HEK293 (cell line): ENCODE measurements at regions of chr15 and their contacts with region 1.

Region 1: DNA sequence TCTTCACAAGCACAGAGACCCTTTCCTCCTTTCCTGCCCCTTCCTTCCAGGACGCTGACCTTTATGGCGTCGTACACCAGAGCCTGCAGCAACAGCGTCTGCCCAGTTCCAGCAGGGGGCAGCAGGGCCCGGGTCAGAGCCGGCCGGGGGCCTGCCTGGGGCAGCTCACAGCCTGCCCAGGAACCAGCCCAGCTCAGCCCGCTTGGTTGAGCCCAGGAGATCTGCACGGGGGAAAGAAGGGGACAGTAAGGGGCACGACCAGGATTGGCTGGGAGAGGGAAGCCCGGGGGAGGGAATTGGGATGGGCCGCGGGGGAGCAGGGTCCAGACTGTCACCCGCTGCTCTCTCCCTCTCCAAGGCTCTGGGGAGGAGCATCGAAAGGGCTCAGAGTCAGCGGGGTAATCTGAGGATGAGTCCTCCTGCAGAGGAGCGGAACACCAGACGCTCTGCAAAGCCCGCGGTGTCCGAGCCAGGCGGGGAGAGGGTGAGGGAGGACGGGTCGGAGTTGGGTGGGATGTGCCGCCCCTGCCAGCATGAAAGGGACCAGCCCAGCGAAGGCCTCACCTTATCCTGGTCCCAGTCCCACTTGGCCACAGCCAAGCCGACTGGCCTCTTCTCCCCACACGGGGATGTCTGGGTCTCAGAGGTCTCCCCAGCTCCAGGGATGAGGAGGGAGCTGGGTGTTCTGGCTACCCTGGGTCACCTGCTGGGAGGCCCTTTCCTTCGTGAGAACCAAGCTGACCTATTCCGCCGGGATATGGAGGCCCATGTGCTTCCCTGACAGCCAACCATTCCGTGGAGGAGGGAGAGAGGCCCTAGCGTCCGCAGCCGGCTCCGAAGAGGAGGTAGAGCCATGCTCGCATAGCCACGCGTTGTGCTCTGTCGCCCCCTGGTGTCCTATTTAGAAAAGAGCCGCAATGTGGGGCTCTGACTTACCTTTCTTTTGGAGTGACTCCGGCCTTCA is 7.4 kb upstream of the IGDCC3 start:
- H3K4me3 ChIP-seq: no peak overlapping the region
- H3K27ac ChIP-seq: peak overlapping the region; percentile 38; the same call in 1 of the 2 replicates
- H3K4me1 ChIP-seq: peaks cover 17% of the 10 kb centered on the region
- CTCF ChIP-seq: peak; percentile 97

Region 2: DNA sequence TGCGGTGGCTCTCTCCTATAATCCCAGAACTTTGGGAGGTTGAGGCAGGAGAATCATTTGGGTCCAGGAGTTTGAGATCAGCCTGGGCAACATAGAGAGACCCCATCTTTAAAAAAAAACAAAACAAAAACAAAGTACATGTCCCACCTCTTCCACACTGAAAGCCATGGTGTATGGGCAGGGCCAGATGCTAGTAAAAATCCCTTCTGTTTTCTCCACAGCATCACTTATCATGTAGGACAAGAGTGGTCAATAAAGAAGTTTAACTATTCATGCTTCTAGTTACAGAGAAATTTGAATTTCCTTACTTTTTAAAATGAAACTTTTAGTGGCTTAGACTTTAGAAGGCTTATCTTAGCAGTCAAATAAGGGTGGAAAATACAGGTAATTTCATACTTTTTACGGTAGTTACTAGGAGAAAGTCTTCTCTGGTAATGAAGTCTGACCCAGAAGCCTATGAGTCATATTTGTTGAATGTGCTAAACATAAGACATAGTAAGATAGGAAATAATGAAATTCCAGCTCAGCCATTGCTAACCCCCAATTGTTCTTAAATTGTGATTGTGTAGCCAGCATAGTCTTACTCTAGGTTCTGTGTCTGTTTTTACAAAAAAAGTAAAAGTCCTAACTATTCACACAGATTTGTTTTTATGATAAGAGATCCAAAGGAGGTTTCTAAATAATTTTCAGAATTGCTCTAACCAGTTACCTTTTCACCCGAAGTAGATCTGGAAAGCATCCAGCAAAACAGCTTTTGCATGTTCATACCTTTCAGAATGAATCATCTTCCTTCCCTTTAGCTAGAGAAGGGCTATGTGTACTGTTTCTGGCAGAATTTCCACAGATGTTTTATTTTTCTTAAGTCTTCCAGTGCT is 941.2 kb before region 1 on chr15:
- CTCF ChIA-PET with region 1: no interaction called
- POLR2A ChIA-PET with region 1: no interaction called
- H3K4me3 ChIP-seq: no peak overlapping the region
- H3K27ac ChIP-seq: no peak overlapping the region
- H3K4me1 ChIP-seq: no peaks in the 10 kb centered on the region; the same call in 1 of the 2 replicates
- CTCF ChIP-seq: no peak

Region 3: GRCh38 chr15:65101411-65101890 is 283.7 kb before region 1 on chr15:
- CTCF ChIA-PET with region 1: no interaction called
- POLR2A ChIA-PET with region 1: no interaction called
- H3K4me3 ChIP-seq: no peak overlapping the region
- H3K27ac ChIP-seq: no peak overlapping the region
- H3K4me1 ChIP-seq: no peaks in the 10 kb centered on the region
- CTCF ChIP-seq: no peak

Region 4: GRCh38 chr15:65304389-65305144 is 80.6 kb before region 1 on chr15 and contains the start of gene RNU5B-1:
- CTCF ChIA-PET with region 1: interaction called, 14 read pairs
- POLR2A ChIA-PET with region 1: interaction called, 12 read pairs
- H3K4me3 ChIP-seq: peak within 1 kb of the TSS; percentile 41
- H3K27ac ChIP-seq: peak within 1 kb of the TSS; percentile 83
- H3K4me1 ChIP-seq: peaks cover 8% of the 10 kb centered on the region; the same call in 1 of the 2 replicates
- CTCF ChIP-seq: peak; percentile 89; the same call in 1 of the 2 replicates

Region 5: DNA sequence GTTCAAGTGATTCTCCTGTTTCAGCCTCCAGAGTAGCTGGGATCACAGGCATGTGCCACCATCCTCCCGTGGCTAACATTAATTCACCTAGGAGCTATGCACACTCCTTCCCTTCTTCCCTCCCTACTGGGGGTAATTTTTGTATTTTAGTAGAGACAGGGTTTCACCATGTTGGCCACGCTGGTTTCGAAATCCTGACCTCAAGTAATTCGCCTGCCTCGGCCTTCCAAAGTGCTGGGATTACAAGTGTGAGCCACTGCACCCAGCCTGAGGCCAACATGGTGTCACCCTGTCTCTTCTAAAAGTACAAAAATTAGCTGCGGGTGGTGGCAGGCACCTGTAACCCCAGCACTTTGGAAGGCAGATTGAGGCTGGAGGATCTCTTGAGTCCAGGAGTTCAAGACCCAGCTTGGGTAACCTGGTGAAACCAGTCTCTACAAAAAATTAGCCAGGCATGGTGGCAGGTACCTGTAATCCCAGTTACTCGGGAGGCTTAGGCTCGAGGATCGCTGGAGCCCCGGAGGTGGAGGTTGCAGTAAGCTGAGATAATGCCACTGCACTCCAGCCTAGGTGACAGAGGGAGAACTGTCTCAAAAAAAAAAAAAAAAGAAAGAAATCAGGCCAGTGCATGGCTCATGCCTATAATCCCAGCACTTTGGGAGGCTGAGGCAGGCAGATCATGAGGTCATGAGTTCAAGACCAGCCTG is 74.6 kb before region 1 on chr15:
- CTCF ChIA-PET with region 1: interaction called, 454 read pairs
- POLR2A ChIA-PET with region 1: interaction called, 12 read pairs
- H3K4me3 ChIP-seq: no peak overlapping the region
- H3K27ac ChIP-seq: no peak overlapping the region
- H3K4me1 ChIP-seq: peaks cover 5% of the 10 kb centered on the region; the same call in 1 of the 2 replicates
- CTCF ChIP-seq: no peak

Region 6: DNA sequence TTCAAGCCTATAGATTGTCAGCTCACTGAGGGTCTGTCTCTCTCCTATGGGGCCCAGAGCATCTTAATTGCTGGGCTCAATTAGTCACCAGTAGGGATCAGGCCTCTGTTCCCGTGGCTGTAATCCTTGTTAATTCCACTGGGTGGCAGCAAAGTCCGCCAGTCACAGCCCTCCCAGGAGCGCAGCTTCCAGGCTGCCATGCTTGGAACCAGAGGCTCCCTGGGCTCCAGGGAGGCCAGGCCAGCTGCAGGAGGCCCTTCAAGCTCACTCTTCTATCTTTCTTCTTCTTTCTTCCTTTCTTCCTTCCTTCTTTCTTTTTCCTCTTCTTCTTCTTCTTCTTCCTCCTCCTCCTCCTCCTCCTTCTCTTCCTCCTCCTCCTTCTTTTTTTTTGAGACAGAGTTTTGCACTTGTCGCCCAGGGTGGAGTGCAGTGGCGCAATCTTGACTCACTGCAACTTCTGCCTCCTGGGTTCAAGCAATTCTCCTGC is 66.3 kb before region 1 on chr15:
- CTCF ChIA-PET with region 1: interaction called, 454 read pairs
- POLR2A ChIA-PET with region 1: interaction called, 5 read pairs
- H3K4me3 ChIP-seq: no peak overlapping the region
- H3K27ac ChIP-seq: no peak overlapping the region
- H3K4me1 ChIP-seq: no peaks in the 10 kb centered on the region
- CTCF ChIP-seq: peak; percentile 98

Region 7: GRCh38 chr15:65355173-65355987 is 29.8 kb before region 1 on chr15:
- CTCF ChIA-PET with region 1: interaction called, 10 read pairs
- POLR2A ChIA-PET with region 1: no interaction called
- H3K4me3 ChIP-seq: peak overlapping the region; percentile 7
- H3K27ac ChIP-seq: no peak overlapping the region; the same call in 1 of the 2 replicates
- H3K4me1 ChIP-seq: no peaks in the 10 kb centered on the region; the same call in 1 of the 2 replicates
- CTCF ChIP-seq: no peak

Region 8: DNA sequence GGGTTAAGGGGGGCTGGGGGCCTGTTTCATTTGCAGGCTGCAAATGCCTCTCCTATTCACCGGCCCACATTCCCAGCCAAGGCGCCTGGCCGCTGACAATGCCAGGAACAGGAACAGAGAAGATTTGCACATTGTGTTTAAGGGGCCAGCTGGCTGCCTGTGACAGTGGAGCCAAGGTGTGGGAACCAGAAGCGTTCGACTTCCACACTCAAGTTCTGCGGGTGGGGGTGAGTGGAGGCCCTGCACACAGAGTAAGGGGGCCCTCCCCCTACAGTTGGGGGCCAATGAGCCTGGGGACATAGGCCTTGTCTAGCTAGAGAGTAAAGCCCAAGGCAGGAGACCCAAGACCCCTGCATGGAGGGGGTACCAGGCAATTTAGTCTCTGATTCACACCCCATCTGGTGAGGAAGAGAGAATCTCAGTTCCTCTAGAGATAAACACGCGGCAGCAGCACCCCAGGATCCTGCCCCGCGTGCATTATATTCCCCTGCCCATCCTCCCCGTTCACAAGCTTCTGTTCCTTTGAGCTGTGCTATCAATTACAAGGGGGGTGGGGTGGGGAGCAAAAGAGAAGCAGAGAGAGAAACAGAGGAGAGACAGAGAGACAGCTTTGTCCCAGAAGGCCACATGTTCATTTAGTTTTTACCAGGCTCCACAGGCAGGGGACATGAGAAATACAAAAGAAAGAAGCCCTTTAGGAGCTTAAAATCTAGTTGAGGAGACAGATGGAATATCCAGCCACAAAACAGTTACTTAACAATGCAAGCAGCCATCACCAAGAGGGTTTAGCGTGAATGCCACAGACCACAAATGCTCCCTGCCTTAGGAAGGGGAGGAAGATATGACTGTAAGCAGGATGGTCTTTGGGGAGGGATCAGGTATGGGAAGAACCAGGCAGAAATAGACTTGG is 16.6 kb before region 1 on chr15:
- CTCF ChIA-PET with region 1: interaction called, 13 read pairs
- POLR2A ChIA-PET with region 1: interaction called, 3 read pairs
- H3K4me3 ChIP-seq: no peak overlapping the region
- H3K27ac ChIP-seq: no peak overlapping the region
- H3K4me1 ChIP-seq: no peaks in the 10 kb centered on the region
- CTCF ChIP-seq: no peak